ENCODE measurements at regions of chr3 and their contacts with region 1.

Region 1: DNA sequence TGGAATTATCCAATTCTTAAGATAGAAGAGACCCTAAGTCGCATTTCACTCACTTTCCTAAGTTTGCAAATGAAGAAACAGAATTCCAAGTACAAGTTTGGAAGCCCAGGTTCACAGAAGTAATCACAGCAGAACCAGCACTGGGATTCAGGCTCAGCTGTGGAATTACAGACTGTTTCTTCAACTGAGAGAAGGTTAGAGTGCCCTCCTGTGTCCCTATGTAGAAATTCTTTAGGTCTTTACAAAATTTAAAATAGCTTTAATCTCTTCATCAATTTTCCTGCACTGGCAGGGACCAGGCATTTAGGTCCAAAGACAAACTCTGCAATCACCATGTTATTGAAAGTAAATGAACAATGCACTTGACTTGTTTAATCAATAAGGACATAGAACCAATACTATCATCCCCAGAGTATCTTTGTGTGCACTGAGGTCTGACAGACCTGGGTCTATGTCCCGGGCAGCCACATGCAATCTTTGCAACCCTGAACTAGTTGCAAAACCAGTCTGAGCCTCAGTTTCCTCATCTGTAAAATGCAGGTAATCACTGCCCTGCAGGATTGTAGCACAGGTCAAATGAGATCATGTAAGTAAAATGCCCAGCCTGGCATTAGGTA is 96.3 kb upstream of the ZBED2 start:
- H3K4me3 ChIP-seq: no peak overlapping the region
- H3K27ac ChIP-seq: no peak overlapping the region
- H3K4me1 ChIP-seq: peaks cover 17% of the 10 kb centered on the region
- CTCF ChIP-seq: no peak

Region 2: GRCh38 chr3:111577794-111578685 is 113.4 kb before region 1 on chr3:
- CTCF ChIA-PET with region 1: interaction called, 10 read pairs
- POLR2A ChIA-PET with region 1: no interaction called
- H3K4me3 ChIP-seq: no peak overlapping the region
- H3K27ac ChIP-seq: no peak overlapping the region
- H3K4me1 ChIP-seq: no peaks in the 10 kb centered on the region
- CTCF ChIP-seq: peak; percentile 26; the same call in 1 of the 2 replicates